H1 (cell line): ENCODE measurements at regions of chr18 and their contacts with region 1.

Region 1: DNA sequence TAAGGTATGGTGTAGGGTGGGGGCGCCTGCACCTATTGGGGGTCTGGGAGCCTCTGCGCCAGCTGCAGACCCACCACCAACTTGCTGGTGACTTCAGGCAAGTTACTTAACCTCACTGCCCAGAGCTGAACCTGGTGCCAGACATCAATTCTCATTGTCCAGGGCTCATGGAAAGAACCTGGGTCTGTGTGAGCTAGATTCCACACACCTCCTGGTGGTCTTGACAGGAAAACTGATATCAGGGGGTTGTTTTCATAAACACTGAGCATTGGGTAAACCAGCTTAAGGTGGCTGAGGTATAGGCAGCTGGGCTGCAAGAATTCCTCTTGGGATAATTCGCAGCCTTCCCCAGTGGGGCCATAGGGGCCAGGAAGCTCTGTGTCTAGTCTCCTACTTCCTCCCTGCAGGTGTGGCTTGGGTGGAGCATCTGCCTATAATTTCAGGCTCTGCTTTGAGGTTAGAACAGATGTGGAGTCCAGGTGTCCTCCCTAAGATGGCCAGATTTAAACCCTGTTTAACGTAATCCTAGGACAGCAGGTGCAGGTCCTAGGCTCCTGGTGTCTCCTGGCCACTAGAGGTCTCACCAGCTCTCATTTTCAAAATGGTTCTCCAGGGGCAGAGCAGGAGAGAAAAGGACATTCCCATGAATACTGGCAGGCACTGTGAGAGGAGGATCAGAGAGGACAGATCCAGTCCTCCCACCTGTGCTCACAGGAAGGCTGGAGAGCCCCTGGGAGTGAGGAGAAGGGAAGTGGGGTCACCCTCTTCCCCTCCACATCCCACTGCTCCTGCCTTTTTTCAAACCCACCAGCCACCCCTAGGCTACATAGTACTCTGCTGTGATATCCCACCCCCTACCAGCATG is 100.4 kb upstream of the SMAD2 start:
- DNase-seq: peak; percentile 9 to 52
- H3K4me3 ChIP-seq: no peak overlapping the region
- H3K27ac ChIP-seq: no peak overlapping the region
- H3K4me1 ChIP-seq: peaks cover 0 to 2% (median under 1%) of the 10 kb centered on the region in 4 experiments; a peak in 2 of 7 replicates
- H3K27me3 ChIP-seq: no peaks in the 10 kb centered on the region; a peak in 1 of 7 replicates
- CTCF ChIP-seq: peak; percentile 68 to 93 (median 85)
- EP300 ChIP-seq: no peak
- POLR2A ChIP-seq: no peak
- RAD21 ChIP-seq: peak; percentile 85 to 89

Region 2: DNA sequence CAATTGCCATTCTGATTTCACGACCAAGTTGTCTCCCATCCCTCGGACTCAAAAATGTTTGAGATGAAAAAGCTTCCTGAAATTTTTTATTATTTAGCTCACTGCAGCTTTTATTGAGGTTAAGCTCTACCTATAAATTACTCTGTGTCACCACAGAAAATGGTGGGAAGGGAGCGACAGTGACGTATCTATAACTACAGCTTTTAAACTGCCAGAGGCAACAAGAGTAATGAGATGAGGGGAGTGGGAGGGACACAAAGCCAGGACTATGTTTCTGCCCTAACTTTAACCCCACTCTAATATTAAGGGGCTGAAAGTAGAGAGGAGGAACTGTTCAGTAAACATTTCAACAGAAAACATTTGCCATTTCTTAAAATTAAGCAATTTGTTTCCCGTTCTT is 137.8 kb before region 1 on chr18:
- CTCF ChIA-PET with region 1: no interaction called
- POLR2A ChIA-PET with region 1: no interaction called
- DNase-seq: no peak
- H3K4me3 ChIP-seq: no peak overlapping the region
- H3K27ac ChIP-seq: no peak overlapping the region
- H3K4me1 ChIP-seq: peaks cover 0 to 7% (median 1%) of the 10 kb centered on the region in 4 experiments; a peak in 2 of 7 replicates
- H3K27me3 ChIP-seq: no peaks in the 10 kb centered on the region
- CTCF ChIP-seq: no peak
- EP300 ChIP-seq: no peak
- POLR2A ChIP-seq: no peak
- RAD21 ChIP-seq: no peak

Region 3: GRCh38 chr18:48017635-48018034 is 13.2 kb before region 1 on chr18:
- CTCF ChIA-PET with region 1: interaction called, 16 read pairs
- POLR2A ChIA-PET with region 1: no interaction called
- DNase-seq: no peak
- H3K4me3 ChIP-seq: no peak overlapping the region
- H3K27ac ChIP-seq: no peak overlapping the region
- H3K4me1 ChIP-seq: peaks cover 0 to 7% (median 0%) of the 10 kb centered on the region in 4 experiments; a peak in 2 of 7 replicates
- H3K27me3 ChIP-seq: no peaks in the 10 kb centered on the region
- CTCF ChIP-seq: no peak
- EP300 ChIP-seq: no peak
- POLR2A ChIP-seq: no peak
- RAD21 ChIP-seq: no peak

Region 4: DNA sequence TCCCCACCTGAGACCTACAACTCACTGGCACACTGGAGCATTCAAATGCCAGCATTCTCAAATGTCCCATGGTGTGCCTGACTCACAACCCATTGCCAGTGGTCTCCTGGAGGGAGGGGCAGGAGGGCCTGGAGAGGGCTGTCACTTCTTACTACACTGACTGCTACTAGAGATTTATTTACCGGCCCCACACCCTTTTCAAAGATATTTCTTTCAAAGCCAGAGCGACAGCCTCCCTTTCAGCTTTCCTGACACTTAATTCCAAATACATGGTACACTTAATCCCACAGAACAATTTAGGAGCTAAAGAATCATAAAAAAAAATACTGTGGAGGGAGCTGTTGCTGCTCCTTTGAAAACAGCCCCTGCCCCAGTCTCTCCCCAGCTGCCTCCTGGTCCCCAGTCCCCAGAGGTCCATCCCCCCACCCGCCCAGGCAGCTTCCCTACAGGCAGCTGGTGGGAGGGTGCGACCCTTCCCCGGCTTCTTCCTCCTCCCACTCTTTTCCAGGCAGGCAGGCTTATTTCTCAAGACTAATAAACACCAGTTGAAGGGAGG is 28.7 kb after region 1 on chr18:
- CTCF ChIA-PET with region 1: interaction called, 11 read pairs
- POLR2A ChIA-PET with region 1: no interaction called
- DNase-seq: no peak
- H3K4me3 ChIP-seq: no peak overlapping the region
- H3K27ac ChIP-seq: no peak overlapping the region
- H3K4me1 ChIP-seq: peaks cover 3 to 11% (median 9%) of the 10 kb centered on the region in 4 experiments
- H3K27me3 ChIP-seq: no peaks in the 10 kb centered on the region; a peak in 2 of 7 replicates
- CTCF ChIP-seq: no peak
- EP300 ChIP-seq: no peak
- POLR2A ChIP-seq: no peak
- RAD21 ChIP-seq: peak; percentile 6 to 12; a peak in 2 of 4 replicates

Region 5: DNA sequence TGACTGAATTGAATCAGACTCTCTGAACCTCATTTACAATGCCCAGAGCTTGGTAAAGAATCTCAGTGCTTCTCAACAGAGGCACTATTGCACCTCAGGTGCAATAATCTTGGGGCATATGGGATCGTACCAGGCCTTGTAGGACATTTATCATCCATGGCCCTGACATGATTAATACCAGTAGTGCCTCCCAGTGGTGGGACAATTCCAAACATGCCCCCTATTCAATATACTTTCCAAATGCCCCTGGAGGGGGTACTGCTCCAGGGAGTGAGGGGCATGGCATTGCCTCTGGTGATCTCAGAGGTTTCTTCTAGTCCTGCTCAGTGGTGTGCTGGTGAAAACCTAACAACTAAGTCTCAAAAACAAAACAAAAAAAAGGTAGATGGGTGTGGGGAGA is 74.5 kb after region 1 on chr18:
- CTCF ChIA-PET with region 1: interaction called, 10 read pairs
- POLR2A ChIA-PET with region 1: interaction called, 3 read pairs
- DNase-seq: no peak
- H3K4me3 ChIP-seq: no peak overlapping the region
- H3K27ac ChIP-seq: no peak overlapping the region
- H3K4me1 ChIP-seq: peaks cover 2 to 16% (median 8%) of the 10 kb centered on the region in 4 experiments
- H3K27me3 ChIP-seq: peaks cover 0 to 2% (median 0%) of the 10 kb centered on the region in 4 experiments; a peak in 3 of 7 replicates
- CTCF ChIP-seq: peak; percentile 7 to 75 (median 35)
- EP300 ChIP-seq: no peak
- POLR2A ChIP-seq: no peak
- RAD21 ChIP-seq: peak; percentile 48 to 58